Right ventricle myocardium inferior (tissue), 1 donor: ENCODE measurements at regions of chr5 and their contacts with region 1.

Region 1: GRCh38 chr5:446864-447263 is 3.9 kb downstream of the EXOC3 start:
- DNase-seq: no peak
- ATAC-seq: no peak

Region 2: GRCh38 chr5:167982-168660 is 278.7 kb before region 1 on chr5:
- intact Hi-C with region 1: no loop called
- DNase-seq: no peak
- ATAC-seq: no peak

Region 3: GRCh38 chr5:368183-369084 is 78.4 kb before region 1 on chr5:
- intact Hi-C with region 1: no loop called
- DNase-seq: peak; percentile 61
- ATAC-seq: no peak

Region 4: DNA sequence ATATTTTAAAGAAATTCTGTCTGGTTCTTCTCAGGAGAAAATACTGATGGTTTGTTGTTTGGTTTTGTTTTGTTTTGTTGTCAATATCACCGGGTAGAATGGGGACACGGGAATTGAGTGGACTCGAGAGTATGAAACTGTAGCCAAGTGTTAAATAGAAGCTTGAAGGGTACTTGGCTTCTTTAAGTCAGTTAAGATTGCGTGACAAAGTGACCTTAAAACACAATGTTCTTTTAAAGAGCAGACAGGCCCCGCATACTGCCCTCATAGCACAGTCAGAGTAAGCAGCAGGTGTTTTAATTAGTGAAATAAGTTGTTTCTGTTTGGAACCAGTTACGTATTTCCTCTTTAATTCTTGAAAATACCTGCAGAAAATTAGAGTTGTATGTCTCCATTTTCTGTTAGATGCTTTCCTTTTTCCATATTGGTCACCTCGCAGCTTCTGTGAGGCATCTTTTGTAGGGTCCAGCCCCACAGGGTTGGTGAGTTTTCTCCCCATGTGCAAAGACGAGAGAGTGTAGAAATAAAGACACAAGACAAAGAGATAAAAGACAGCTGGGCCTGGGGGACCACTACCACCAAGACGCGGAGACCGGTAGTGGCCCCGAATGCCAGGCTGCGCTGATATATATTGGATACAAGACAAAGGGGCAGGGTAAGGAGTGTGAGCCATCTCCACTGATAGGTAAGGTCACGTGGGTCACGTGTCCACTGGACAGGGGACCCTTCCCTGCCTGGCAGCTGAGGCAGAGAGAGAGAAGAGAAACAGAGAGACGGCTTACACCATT is 455.5 kb after region 1 on chr5:
- intact Hi-C with region 1: loop called (anchors 5 kb)
- DNase-seq: no peak
- ATAC-seq: peak; percentile 52